Endothelial cell of umbilical vein (primary cell): ENCODE measurements at regions of chr12 and their contacts with region 1.

Region 1: GRCh38 chr12:76455582-76456345 is 103.8 kb downstream of the OSBPL8 start:
- DNase-seq: peak; percentile 82
- H3K4me3 ChIP-seq: no peak overlapping the region
- H3K27ac ChIP-seq: peak overlapping the region; percentile 48
- H3K4me1 ChIP-seq: peaks cover 9% of the 10 kb centered on the region
- H3K27me3 ChIP-seq: no peaks in the 10 kb centered on the region
- CTCF ChIP-seq: peak; percentile 48 to 54
- POLR2A ChIP-seq: no peak

Region 2: GRCh38 chr12:75225546-75225945 is 1230.2 kb before region 1 on chr12:
- CTCF ChIA-PET with region 1: no interaction called
- POLR2A ChIA-PET with region 1: no interaction called
- dilution Hi-C with region 1: no loop called
- intact Hi-C with region 1: no loop called
- DNase-seq: no peak
- H3K4me3 ChIP-seq: no peak overlapping the region
- H3K27ac ChIP-seq: no peak overlapping the region
- H3K4me1 ChIP-seq: no peaks in the 10 kb centered on the region
- H3K27me3 ChIP-seq: no peaks in the 10 kb centered on the region
- CTCF ChIP-seq: no peak
- POLR2A ChIP-seq: no peak

Region 3: DNA sequence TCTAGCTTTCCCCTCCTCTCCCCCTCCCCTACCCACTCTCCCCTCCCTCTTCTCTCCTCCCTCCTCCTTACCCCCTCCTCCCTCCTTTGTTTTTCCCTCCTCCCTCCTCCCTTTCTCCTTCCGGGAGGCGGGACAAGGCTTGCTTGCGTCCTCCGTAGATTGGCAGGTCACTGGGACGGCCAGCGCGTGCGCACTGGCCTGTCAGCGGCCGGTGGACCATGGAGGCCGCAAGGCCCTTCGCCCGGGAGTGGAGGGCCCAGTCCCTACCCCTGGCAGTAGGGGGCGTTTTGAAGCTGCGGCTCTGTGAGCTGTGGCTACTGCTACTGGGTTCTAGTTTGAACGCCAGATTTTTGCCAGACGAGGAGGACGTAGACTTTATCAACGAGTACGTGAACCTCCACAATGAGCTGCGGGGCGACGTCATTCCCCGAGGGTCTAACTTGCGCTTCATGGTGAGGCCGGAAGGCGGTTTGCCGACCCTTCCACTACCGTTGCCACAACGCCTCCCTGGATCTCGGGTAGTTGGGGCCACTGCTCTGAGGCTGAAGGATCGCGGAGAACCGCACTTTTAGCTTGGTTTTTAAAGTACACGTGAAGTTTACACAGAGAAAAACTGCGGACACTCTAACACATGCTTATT is 1064.7 kb before region 1 on chr12 and contains the start of gene GLIPR1L2:
- CTCF ChIA-PET with region 1: no interaction called
- POLR2A ChIA-PET with region 1: no interaction called
- dilution Hi-C with region 1: no loop called
- intact Hi-C with region 1: loop called (anchors 1 kb)
- DNase-seq: peak; percentile 98
- H3K4me3 ChIP-seq: peak within 1 kb of the TSS; percentile 2 to 63 (median 50)
- H3K27ac ChIP-seq: peak within 1 kb of the TSS; percentile 31
- H3K4me1 ChIP-seq: peaks cover 29% of the 10 kb centered on the region
- H3K27me3 ChIP-seq: no peaks in the 10 kb centered on the region
- CTCF ChIP-seq: peak; percentile 89 to 94
- POLR2A ChIP-seq: no peak
- total RNA-seq, gene GLIPR1L2: not detected in 2 replicates

Region 4: DNA sequence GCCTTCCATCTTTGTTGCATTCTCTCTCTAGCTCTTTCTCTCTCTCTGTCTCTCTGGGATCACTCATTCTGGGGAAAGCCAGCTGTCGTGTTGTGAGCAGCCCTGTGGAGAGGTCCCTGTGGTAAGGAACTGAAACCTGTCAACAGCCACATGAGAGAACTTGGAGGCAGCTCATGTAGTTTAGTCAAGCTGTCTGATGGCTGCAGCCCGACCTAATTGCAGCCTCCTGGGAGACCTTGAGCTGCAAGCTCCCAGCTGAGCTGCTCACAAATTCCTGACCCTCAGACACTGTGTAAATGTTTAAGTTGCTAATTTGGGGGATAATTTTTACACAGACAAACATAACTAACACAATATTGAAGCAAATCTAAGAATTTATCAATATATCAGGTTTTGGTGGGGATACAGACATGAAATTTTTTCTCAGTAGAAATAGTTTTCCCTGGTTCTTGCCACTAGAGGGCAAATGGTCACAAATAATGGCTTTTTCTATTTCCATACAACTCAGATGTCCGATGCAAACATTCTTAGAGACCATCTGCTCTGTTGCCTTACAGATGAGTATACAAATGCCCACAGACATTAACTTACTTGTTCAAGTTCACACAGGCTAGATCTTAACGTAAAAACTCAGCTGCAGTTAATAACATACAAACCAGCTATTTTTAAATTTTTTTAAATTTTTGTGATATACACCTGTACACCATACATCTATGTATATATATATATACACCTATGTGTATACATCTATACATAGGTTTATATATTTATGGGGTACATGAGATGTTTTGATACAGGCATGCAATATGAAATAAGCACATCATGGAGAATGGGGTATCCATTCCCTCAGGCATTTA is 928.9 kb before region 1 on chr12:
- CTCF ChIA-PET with region 1: interaction called, 7 read pairs
- POLR2A ChIA-PET with region 1: no interaction called
- dilution Hi-C with region 1: no loop called
- intact Hi-C with region 1: loop called (anchors 5 kb)
- DNase-seq: peak; percentile 70
- H3K4me3 ChIP-seq: no peak overlapping the region
- H3K27ac ChIP-seq: no peak overlapping the region
- H3K4me1 ChIP-seq: no peaks in the 10 kb centered on the region
- H3K27me3 ChIP-seq: no peaks in the 10 kb centered on the region
- CTCF ChIP-seq: peak; percentile 38 to 49
- POLR2A ChIP-seq: no peak

Region 5: GRCh38 chr12:75714462-75715322 is 741.1 kb before region 1 on chr12:
- CTCF ChIA-PET with region 1: no interaction called
- POLR2A ChIA-PET with region 1: no interaction called
- dilution Hi-C with region 1: no loop called
- intact Hi-C with region 1: no loop called
- DNase-seq: peak; percentile 21
- H3K4me3 ChIP-seq: no peak overlapping the region
- H3K27ac ChIP-seq: no peak overlapping the region
- H3K4me1 ChIP-seq: peaks cover 5% of the 10 kb centered on the region
- H3K27me3 ChIP-seq: no peaks in the 10 kb centered on the region
- CTCF ChIP-seq: no peak
- POLR2A ChIP-seq: no peak

Region 6: GRCh38 chr12:76037130-76038103 is 418.3 kb before region 1 on chr12:
- CTCF ChIA-PET with region 1: interaction called, 20 read pairs
- POLR2A ChIA-PET with region 1: no interaction called
- dilution Hi-C with region 1: no loop called
- intact Hi-C with region 1: loop called (anchors 1 kb)
- DNase-seq: peak; percentile 87
- H3K4me3 ChIP-seq: peak overlapping the region in 1 of 3 experiments; percentile 45
- H3K27ac ChIP-seq: peak overlapping the region; percentile 88
- H3K4me1 ChIP-seq: peaks cover 26% of the 10 kb centered on the region
- H3K27me3 ChIP-seq: no peaks in the 10 kb centered on the region
- CTCF ChIP-seq: peak; percentile 68 to 79
- POLR2A ChIP-seq: peak; percentile 60

Region 7: GRCh38 chr12:76113800-76114757 is 341.7 kb before region 1 on chr12:
- CTCF ChIA-PET with region 1: no interaction called
- POLR2A ChIA-PET with region 1: no interaction called
- dilution Hi-C with region 1: no loop called
- intact Hi-C with region 1: no loop called
- DNase-seq: no peak
- H3K4me3 ChIP-seq: no peak overlapping the region
- H3K27ac ChIP-seq: no peak overlapping the region
- H3K4me1 ChIP-seq: peaks cover 5% of the 10 kb centered on the region
- H3K27me3 ChIP-seq: no peaks in the 10 kb centered on the region
- CTCF ChIP-seq: no peak
- POLR2A ChIP-seq: no peak

Region 8: GRCh38 chr12:76158518-76159321 is 297.0 kb before region 1 on chr12:
- CTCF ChIA-PET with region 1: interaction called, 8 read pairs
- POLR2A ChIA-PET with region 1: no interaction called
- dilution Hi-C with region 1: no loop called
- intact Hi-C with region 1: loop called (anchors 1 kb)
- DNase-seq: peak; percentile 78
- H3K4me3 ChIP-seq: no peak overlapping the region
- H3K27ac ChIP-seq: no peak overlapping the region
- H3K4me1 ChIP-seq: peaks cover 4% of the 10 kb centered on the region
- H3K27me3 ChIP-seq: no peaks in the 10 kb centered on the region
- CTCF ChIP-seq: peak; percentile 74 to 77
- POLR2A ChIP-seq: no peak

Region 9: DNA sequence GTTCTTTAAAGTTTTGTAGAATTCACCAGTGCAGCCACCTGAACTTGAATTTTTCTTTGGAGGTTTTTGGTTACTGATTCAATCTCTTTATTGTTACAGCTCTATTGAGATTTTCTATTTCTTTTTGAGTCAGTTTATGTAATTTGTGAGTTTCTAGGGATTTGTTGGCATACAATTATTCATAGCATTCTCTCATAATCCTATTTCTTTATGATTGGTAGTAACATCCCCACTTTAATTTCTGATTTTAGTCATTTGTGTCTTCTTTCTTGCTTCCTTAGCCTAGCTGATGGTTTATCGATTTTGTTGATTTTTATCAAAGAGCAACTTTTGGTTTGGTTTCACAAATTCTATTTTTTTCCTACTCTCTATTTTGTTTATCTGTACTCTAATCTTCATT is 89.6 kb before region 1 on chr12:
- CTCF ChIA-PET with region 1: no interaction called
- POLR2A ChIA-PET with region 1: no interaction called
- dilution Hi-C with region 1: no loop called
- intact Hi-C with region 1: no loop called
- DNase-seq: no peak
- H3K4me3 ChIP-seq: no peak overlapping the region
- H3K27ac ChIP-seq: no peak overlapping the region
- H3K4me1 ChIP-seq: no peaks in the 10 kb centered on the region
- H3K27me3 ChIP-seq: no peaks in the 10 kb centered on the region
- CTCF ChIP-seq: no peak
- POLR2A ChIP-seq: no peak

Region 10: DNA sequence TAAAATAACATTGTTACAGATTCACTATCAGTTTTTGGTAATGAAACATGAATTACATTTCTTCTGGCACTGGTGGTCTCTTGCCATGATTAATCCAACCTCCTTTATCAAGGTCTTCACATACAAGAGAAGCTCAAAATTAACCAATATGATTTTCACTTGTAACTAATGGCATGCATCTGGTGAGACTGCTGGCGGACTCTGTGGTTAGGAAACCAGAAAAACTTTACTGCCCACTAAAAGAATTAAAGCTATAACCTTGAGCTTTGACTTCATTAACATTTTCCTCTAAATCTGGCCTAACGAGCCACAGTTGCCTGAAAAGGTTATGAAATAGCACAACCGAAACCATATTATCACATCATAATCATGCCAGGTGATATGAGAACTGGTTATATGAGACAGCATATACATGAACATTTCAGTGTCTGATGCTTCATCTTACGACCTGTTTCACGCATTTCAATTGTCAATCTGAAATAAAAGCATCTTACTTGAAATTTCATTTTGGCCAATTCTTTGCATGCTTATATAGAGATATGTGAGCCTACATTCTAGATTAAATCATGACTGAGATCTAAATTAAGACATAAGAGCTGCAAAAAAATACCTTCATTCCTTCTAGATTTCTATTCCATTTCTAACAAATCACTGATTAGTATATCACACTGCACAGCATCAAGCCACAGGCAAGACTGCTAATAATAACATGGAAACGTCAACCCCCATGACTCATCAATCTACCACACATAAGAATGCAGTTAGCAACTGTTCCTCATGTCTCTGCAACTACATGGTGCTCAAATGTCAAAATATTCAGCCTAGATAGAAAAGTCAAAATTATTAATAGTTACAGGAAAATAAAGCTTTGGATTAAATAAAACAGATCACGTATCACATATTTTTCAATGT is 14.5 kb after region 1 on chr12:
- CTCF ChIA-PET with region 1: interaction called, 14 read pairs
- POLR2A ChIA-PET with region 1: no interaction called
- dilution Hi-C with region 1: no loop called
- intact Hi-C with region 1: no loop called
- DNase-seq: peak; percentile 68
- H3K4me3 ChIP-seq: no peak overlapping the region
- H3K27ac ChIP-seq: no peak overlapping the region
- H3K4me1 ChIP-seq: peaks cover 8% of the 10 kb centered on the region
- H3K27me3 ChIP-seq: no peaks in the 10 kb centered on the region
- CTCF ChIP-seq: no peak
- POLR2A ChIP-seq: no peak

Region 11: DNA sequence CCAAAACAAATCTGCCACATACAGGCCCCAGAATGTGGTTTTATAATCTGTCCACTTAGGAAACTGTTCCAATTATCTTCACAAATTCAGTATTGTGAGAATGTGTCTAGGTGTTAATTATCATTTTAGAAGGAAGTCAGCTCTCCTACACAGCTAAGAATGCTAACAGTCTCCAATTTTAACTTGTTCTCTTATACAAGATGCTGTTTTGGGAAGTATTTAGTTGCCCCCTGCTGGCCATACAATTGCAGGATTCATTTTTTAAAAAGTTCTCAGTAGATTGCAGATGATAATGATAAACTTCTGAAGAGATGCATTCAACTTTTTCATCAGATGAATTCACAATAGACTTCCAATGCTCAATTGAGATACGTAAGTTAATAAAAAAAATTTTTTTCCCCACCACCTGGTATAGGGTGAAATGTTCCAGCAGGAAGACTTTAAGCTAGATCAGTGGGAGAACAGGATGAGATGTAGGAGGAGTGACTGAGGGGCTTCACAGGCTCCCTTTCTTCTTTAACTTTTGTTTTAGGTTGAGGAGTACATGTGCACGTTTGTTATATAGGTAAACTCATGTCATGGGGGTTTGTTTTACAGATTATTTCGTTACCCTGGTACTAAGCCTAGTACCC is 131.1 kb after region 1 on chr12:
- CTCF ChIA-PET with region 1: interaction called, 39 read pairs
- POLR2A ChIA-PET with region 1: no interaction called
- dilution Hi-C with region 1: no loop called
- intact Hi-C with region 1: loop called (anchors 5 kb)
- DNase-seq: peak; percentile 49
- H3K4me3 ChIP-seq: no peak overlapping the region
- H3K27ac ChIP-seq: no peak overlapping the region
- H3K4me1 ChIP-seq: peaks cover 3% of the 10 kb centered on the region
- H3K27me3 ChIP-seq: no peaks in the 10 kb centered on the region
- CTCF ChIP-seq: peak; percentile 21 to 47
- POLR2A ChIP-seq: no peak